ENCODE measurements at regions of chr17 and their contacts with region 1.

Region 1: GRCh38 chr17:48816774-48817590 is at the start of gene TTLL6:
- DNase-seq: peak; percentile 98
- ATAC-seq: peak; percentile 96
- H3K4me3 ChIP-seq: peak within 1 kb of the TSS; percentile 65
- H3K27ac ChIP-seq: no peak within 1 kb of the TSS
- H3K4me1 ChIP-seq: peaks cover 12% of the 10 kb centered on the region
- H3K27me3 ChIP-seq: no peaks in the 10 kb centered on the region
- CTCF ChIP-seq: no peak
- total RNA-seq, gene TTLL6: 0.29 and 0.40 TPM in 2 replicates

Region 2: GRCh38 chr17:48756830-48757251 is 60.1 kb before region 1 on chr17:
- CTCF ChIA-PET with region 1: no interaction called
- POLR2A ChIA-PET with region 1: no interaction called
- intact Hi-C with region 1: no loop called
- DNase-seq: peak; percentile 43
- ATAC-seq: peak; percentile 44
- H3K4me3 ChIP-seq: no peak overlapping the region
- H3K27ac ChIP-seq: peak overlapping the region; percentile 32
- H3K4me1 ChIP-seq: peaks cover 55% of the 10 kb centered on the region
- H3K27me3 ChIP-seq: no peaks in the 10 kb centered on the region
- CTCF ChIP-seq: no peak

Region 3: DNA sequence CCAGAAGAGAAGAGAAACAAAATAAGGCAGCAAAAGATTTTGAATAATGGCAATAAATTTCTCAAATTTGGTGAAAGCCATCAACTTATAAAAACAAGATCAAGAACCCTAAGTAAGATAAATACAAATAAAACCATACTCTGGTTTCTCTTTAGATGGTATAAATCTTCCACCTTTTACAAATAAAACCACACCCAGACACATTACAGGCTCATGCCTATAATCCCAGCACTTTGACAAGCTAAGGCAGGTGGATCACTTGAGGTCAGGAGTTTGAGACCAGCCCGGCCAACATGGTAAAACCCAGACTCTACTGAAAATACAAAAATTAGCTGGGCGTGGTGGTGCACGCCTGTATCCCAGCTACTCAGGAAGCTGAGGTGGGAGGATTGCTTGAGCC is 43.7 kb before region 1 on chr17:
- CTCF ChIA-PET with region 1: no interaction called
- POLR2A ChIA-PET with region 1: no interaction called
- intact Hi-C with region 1: no loop called
- DNase-seq: no peak
- ATAC-seq: no peak
- H3K4me3 ChIP-seq: no peak overlapping the region
- H3K27ac ChIP-seq: no peak overlapping the region
- H3K4me1 ChIP-seq: no peaks in the 10 kb centered on the region; the same call in 1 of the 2 replicates
- H3K27me3 ChIP-seq: no peaks in the 10 kb centered on the region
- CTCF ChIP-seq: no peak

Region 4: DNA sequence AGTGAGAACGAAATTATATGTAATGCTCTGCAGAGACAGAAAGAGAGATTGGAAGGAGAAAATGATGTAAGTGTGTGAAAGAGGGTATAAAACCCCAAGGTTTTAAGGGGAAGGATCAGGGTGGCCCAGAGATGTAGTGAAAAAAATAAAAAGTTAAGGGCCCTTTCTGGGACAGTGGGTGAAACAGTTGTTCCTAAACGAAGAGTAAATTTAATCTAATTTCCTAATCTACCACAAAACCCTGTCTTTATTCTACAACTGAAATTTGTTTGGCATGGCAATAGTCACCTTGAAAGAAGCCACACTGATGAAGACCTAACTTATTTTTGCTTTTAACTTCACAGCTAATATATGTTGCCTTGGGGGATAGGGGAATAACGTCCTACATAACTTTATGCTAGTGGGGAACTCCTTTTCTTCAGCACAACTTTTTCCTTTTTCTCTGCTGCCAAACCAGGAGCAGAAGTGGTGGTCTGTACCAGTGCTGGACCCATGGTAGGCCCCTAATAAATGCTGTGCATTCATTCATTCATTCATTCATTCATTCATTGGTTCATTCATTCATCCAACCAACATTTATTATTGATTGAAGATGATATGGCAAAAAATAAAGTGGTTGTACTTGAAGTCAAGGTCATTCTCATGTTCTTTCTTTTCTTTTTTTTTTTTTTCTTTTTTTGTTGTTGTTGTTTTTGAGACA is 39.3 kb after region 1 on chr17:
- CTCF ChIA-PET with region 1: interaction called, 3 read pairs
- POLR2A ChIA-PET with region 1: interaction called, 13 read pairs
- intact Hi-C with region 1: no loop called
- DNase-seq: no peak
- ATAC-seq: no peak
- H3K4me3 ChIP-seq: no peak overlapping the region
- H3K27ac ChIP-seq: no peak overlapping the region
- H3K4me1 ChIP-seq: no peaks in the 10 kb centered on the region
- H3K27me3 ChIP-seq: no peaks in the 10 kb centered on the region
- CTCF ChIP-seq: no peak

Measured in PC-3 (cell line).